CD8-positive, alpha-beta T cell (primary cell): ENCODE measurements at regions of chr21 and their contacts with region 1.

Region 1: DNA sequence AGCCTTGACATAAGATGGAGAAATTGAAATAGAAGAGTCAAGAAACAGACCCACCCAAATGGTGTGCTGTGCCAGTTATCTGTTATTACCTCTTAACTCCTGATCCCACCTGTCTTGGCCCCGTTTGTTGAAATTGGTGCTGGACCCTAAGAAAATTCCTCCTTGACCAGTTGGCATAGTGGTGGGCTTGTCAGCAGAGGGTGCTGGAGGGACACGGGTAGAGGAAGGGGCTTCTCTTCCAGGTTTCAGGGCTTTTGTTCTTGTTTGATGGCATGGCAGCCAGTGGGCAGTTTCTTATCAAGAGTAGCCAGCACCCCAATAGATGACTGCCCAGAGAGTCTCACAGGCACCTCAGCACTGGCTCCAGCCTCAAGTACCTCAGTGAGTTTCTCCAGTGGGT is 51.6 kb downstream of the PCBP3 start:
- DNase-seq: no peak
- ATAC-seq: no peak
- H3K4me3 ChIP-seq: no peak overlapping the region
- H3K4me3 Mint-ChIP-seq: no peak overlapping the region
- H3K27ac ChIP-seq: no peak overlapping the region
- H3K27ac Mint-ChIP-seq: no peak overlapping the region
- H3K4me1 ChIP-seq: peaks cover 15% of the 10 kb centered on the region
- H3K4me1 Mint-ChIP-seq: peaks cover 22% of the 10 kb centered on the region
- H3K27me3 ChIP-seq: no peaks in the 10 kb centered on the region
- H3K27me3 Mint-ChIP-seq: no peaks in the 10 kb centered on the region
- CTCF ChIP-seq: no peak

Region 2: DNA sequence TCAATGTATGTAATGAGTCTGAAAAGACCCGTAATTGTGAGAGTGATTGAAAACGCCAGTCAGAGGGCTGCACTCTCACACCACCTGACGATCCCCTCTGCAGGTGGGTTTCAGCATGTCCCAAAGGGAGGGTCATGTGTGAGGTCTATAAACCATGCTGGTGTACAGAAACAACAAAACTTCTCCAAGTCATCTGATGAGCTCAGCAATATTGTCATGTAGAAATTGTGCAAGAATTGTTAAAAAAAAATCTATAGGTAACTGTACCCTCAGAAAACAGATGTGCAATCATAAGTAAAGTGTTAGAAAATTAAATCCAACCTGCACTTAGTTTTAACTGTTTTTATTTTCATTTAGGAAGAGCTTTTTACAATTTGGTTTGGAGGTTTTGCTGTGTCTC is 100.9 kb after region 1 on chr21:
- CTCF ChIA-PET with region 1: no interaction called
- POLR2A ChIA-PET with region 1: no interaction called
- intact Hi-C with region 1: loop called in 1 of 2 experiments (anchors 1 kb)
- DNase-seq: no peak
- ATAC-seq: no peak
- H3K4me3 ChIP-seq: no peak overlapping the region
- H3K4me3 Mint-ChIP-seq: no peak overlapping the region
- H3K27ac ChIP-seq: no peak overlapping the region
- H3K27ac Mint-ChIP-seq: no peak overlapping the region
- H3K4me1 ChIP-seq: no peaks in the 10 kb centered on the region
- H3K4me1 Mint-ChIP-seq: no peaks in the 10 kb centered on the region
- H3K27me3 ChIP-seq: no peaks in the 10 kb centered on the region
- H3K27me3 Mint-ChIP-seq: no peaks in the 10 kb centered on the region
- CTCF ChIP-seq: no peak

Region 3: DNA sequence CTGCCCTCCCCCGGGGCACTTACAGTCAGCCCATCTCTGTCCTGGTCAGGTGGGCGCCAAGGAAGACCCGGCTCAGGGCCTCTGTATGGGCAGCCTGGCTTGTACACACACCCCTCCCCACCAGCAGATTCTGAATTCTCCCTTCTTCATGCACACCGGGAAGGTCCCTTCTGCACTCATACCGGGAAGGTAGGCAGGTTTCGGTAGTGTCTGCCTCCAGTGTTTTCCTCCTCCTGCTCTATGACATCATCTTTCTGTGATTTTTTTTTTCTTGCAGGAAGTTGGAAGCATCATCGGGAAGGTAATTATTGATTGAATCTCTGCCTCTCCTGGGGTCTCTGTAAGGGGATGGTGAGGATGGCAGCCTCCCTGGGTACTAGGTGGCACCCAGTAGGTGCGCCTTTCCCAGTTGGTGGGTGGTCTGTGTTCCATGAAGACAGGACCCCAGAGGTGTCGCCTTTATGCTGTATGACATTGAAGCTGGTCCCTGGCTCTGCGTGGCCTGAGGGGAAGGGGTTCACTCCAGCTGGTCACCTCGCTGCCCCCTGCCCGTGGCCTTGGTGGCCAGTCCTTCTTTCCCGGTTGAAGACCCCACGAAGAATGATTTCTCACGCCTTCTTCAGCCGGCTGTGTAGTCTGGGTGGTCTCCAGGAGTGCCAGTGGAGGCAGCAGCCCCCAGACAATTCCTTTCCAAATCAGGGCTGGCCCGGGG is 204.4 kb after region 1 on chr21:
- CTCF ChIA-PET with region 1: no interaction called
- POLR2A ChIA-PET with region 1: no interaction called
- intact Hi-C with region 1: no loop called
- DNase-seq: no peak
- ATAC-seq: no peak
- H3K4me3 ChIP-seq: no peak overlapping the region
- H3K4me3 Mint-ChIP-seq: no peak overlapping the region
- H3K27ac ChIP-seq: no peak overlapping the region
- H3K27ac Mint-ChIP-seq: no peak overlapping the region
- H3K4me1 ChIP-seq: no peaks in the 10 kb centered on the region
- H3K4me1 Mint-ChIP-seq: peaks cover 1% of the 10 kb centered on the region
- H3K27me3 ChIP-seq: no peaks in the 10 kb centered on the region
- H3K27me3 Mint-ChIP-seq: no peaks in the 10 kb centered on the region
- CTCF ChIP-seq: no peak